AG04450 (cell line): ENCODE measurements at regions of chr6 and their contacts with region 1.

Region 1: DNA sequence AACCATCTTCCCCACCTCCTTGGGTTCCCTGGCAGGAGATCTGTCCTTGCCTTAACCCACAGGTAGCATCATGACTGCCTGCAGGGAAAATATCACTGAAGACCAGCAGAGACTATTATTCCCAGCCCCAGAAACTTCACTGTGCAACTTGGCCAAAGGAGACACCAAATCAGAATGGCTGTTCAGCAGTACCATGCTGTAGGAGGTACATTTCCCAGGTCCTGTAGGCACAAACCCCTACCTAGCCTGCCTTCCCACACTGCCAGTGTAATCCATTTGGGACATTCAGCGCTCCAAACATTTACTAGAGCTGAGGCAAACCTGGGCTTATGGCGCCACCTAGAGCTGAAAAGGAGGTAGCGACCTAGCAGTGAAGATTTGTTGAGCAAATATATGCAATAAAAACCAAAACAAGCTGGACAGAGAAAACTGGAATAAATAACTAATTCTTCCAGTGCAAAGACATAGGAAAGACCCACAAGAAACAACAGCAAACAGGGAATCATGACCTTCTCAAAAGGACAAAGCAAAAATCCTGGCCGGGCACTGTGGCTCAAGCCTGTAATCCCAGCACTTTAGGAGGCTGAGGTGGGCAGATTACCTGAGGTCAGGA is 60.3 kb downstream of the VTA1 start:
- DNase-seq: peak; percentile 33
- H3K4me3 ChIP-seq: no peak overlapping the region
- H3K27ac ChIP-seq: no peak overlapping the region
- H3K27me3 ChIP-seq: no peaks in the 10 kb centered on the region
- CTCF ChIP-seq: peak; percentile 92

Region 2: DNA sequence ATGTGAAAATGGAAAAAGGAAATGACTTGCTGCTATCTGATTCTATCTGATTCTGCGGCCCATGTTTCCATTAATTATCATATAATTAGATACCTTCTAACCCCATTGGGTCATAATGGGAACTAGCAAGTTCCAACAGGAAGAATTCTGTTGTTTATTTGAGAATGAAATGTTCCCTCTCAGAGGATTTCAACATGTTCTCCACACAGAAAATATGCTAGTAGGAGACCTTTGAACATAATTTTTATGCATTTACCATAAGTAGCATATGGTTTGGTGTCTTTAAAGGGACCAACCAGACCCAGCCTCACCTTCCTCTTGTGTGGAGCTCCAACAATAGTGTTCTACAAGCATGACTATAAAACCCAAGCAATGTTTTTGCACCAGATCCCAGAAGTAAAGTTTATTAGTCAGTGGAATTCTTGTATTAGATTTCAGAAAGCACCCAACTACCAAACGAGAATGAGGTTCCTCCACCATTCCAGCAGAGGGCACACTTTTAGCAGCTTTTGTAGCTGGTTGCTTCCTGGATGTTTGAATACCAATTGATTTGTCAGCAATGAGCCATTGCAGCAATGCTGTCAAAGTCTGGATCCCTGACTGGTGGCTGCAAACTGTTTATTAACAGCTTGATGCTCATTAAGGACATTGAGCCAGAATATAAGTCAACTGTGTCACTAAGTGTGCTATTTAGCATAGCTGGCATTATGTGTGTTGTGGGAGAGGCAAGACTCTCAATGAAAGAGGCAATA is 218.2 kb before region 1 on chr6:
- CTCF ChIA-PET with region 1: interaction called, 21 read pairs
- POLR2A ChIA-PET with region 1: no interaction called
- DNase-seq: peak; percentile 43
- H3K4me3 ChIP-seq: no peak overlapping the region
- H3K27ac ChIP-seq: no peak overlapping the region
- H3K27me3 ChIP-seq: no peaks in the 10 kb centered on the region
- CTCF ChIP-seq: peak; percentile 91

Region 3: DNA sequence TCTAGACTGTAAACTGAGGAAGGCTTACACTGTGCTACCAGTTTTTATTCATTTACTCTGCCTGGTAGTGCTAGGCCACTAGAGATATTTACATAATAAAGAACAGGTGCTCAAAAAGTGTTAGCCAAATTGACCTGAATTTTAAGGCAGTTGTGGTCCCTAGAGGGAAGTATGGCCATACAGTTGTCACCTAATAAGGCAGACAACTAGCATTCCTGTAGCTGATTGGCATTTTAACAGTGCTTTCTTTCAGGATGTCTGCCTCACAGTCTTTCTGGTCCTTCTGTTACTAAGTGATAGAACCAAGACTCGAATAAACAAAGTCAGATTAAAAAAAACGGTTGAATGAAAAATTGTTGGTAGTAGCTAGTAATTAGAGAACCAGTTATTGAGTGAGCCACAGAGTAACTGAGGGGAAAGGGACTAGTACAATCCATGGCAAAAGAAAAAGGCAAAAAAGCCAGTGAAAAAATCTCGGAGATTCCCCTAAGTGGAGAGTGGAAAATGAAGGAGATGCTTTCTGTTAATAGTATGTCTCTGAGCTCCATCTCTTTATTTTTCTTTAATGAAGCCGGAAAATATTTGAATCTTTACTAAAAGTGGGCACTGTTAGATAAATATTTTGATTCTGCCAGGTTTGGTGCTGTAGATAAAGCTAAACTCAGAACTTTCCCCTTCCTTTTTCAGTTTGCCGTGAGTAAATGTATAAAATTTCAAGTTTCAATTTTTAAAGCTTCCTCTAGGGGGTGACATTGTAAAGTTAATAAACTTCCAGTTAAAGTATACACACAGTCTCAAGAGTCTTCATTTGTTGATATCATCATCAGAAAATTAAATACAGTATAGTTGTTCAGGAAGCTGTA is 51.2 kb before region 1 on chr6:
- CTCF ChIA-PET with region 1: interaction called, 68 read pairs
- POLR2A ChIA-PET with region 1: no interaction called
- DNase-seq: no peak
- H3K4me3 ChIP-seq: no peak overlapping the region
- H3K27ac ChIP-seq: no peak overlapping the region
- H3K27me3 ChIP-seq: no peaks in the 10 kb centered on the region
- CTCF ChIP-seq: peak; percentile 38; the same call in 1 of the 2 replicates

Region 4: DNA sequence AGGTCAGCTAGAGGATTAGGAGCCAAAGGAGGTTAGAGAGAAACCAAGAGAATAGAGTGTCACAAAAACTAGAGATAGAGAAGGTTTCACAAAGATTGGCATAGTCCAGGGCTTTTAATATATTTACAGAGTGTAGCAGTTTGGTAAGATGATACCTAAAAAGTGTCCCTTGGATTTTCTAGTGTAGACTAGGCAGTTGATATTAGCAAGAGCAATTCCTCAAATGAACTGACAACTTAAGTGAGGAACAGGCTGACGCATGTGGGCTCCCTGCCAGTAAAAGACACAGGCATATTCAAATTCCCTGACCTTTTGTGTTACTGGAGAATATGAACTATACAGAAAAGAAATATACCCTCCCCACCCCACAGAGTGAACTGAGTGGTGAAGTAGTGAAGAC is 20.2 kb before region 1 on chr6:
- CTCF ChIA-PET with region 1: interaction called, 12 read pairs
- POLR2A ChIA-PET with region 1: no interaction called
- DNase-seq: no peak
- H3K4me3 ChIP-seq: no peak overlapping the region
- H3K27ac ChIP-seq: no peak overlapping the region
- H3K27me3 ChIP-seq: no peaks in the 10 kb centered on the region
- CTCF ChIP-seq: no peak

Region 5: DNA sequence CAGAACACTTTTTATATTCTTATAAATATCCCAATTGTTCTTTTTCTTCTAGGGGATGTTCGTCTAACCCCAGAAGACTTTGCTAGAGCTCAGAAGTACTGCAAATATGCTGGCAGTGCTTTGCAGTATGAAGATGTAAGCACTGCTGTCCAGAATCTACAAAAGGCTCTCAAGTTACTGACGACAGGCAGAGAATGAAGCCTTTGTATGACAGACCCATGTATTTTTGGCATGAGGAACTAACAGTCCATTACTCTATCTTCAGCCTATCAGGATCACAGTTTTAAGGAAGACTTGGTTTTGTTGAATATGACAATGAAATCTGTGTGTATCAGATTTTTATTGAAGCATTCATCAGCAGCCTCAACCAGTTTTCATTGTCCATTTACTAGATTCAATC is 11.1 kb after region 1 on chr6:
- CTCF ChIA-PET with region 1: interaction called, 29 read pairs
- POLR2A ChIA-PET with region 1: no interaction called
- DNase-seq: no peak
- H3K4me3 ChIP-seq: no peak overlapping the region
- H3K27ac ChIP-seq: no peak overlapping the region
- H3K27me3 ChIP-seq: no peaks in the 10 kb centered on the region
- CTCF ChIP-seq: no peak

Region 6: GRCh38 chr6:142374965-142375733 is 167.8 kb after region 1 on chr6:
- CTCF ChIA-PET with region 1: interaction called, 10 read pairs
- POLR2A ChIA-PET with region 1: no interaction called
- DNase-seq: no peak
- H3K4me3 ChIP-seq: no peak overlapping the region
- H3K27ac ChIP-seq: no peak overlapping the region
- H3K27me3 ChIP-seq: no peaks in the 10 kb centered on the region
- CTCF ChIP-seq: no peak

Region 7: GRCh38 chr6:142542704-142543233 is 335.4 kb after region 1 on chr6:
- CTCF ChIA-PET with region 1: no interaction called
- POLR2A ChIA-PET with region 1: no interaction called
- DNase-seq: peak; percentile 48
- H3K4me3 ChIP-seq: no peak overlapping the region
- H3K27ac ChIP-seq: peak overlapping the region; percentile 57
- H3K27me3 ChIP-seq: no peaks in the 10 kb centered on the region
- CTCF ChIP-seq: no peak